ENCODE measurements at regions of chr2 and their contacts with region 1.

Region 1: GRCh38 chr2:186862869-186863709 is 14.1 kb upstream of the ZSWIM2 start:
- DNase-seq: peak; percentile 57
- H3K4me3 Mint-ChIP-seq: no peak overlapping the region
- H3K27ac Mint-ChIP-seq: no peak overlapping the region
- H3K4me1 Mint-ChIP-seq: no peaks in the 10 kb centered on the region
- H3K27me3 Mint-ChIP-seq: no peaks in the 10 kb centered on the region
- CTCF ChIP-seq: peak; percentile 74

Region 2: DNA sequence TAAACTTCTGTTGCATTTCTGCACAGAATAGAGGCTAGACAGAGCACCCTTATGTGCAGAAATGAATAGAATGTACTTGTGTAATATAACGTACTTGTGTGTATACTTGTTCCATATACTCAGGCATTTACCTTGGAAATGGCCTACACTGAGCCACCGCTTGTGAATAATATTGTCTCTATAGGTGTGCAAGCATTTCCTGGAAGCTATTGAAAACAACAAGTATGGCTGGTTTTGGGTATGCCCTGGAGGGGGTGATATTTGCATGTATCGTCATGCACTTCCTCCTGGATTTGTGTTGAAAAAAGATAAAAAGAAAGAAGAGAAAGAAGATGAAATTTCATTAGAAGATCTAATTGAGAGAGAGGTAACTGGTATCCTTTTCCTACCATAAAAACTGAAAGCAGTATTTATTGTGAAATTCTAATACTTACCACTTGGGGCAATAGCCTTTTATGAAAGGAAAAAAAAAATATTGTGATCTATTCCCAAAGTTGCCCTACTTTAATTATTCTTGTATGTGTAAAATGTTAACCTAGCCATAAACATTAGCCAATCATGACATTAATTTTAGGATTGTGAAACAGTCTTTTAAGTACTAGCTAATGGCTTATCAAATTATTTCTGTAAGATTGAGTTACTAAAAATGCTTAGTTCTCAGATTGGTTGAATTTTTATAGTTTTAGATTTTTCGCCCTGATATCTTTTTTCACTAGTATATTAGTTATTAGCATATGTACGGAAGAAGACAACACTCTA is 359.1 kb before region 1 on chr2:
- CTCF ChIA-PET with region 1: no interaction called
- POLR2A ChIA-PET with region 1: no interaction called
- intact Hi-C with region 1: loop called (anchors 10 kb)
- DNase-seq: peak; percentile 35
- H3K4me3 Mint-ChIP-seq: no peak overlapping the region
- H3K27ac Mint-ChIP-seq: no peak overlapping the region
- H3K4me1 Mint-ChIP-seq: peaks cover 9% of the 10 kb centered on the region
- H3K27me3 Mint-ChIP-seq: no peaks in the 10 kb centered on the region
- CTCF ChIP-seq: peak; percentile 42

Region 3: GRCh38 chr2:187138265-187138664 is 275.2 kb after region 1 on chr2:
- CTCF ChIA-PET with region 1: interaction called, 5 read pairs
- POLR2A ChIA-PET with region 1: no interaction called
- intact Hi-C with region 1: loop called (anchors 10 kb)
- DNase-seq: peak; percentile 43
- H3K4me3 Mint-ChIP-seq: no peak overlapping the region
- H3K27ac Mint-ChIP-seq: no peak overlapping the region
- H3K4me1 Mint-ChIP-seq: no peaks in the 10 kb centered on the region
- H3K27me3 Mint-ChIP-seq: no peaks in the 10 kb centered on the region
- CTCF ChIP-seq: peak; percentile 28

Region 4: GRCh38 chr2:187299122-187299906 is 436.2 kb after region 1 on chr2:
- CTCF ChIA-PET with region 1: interaction called, 4 read pairs
- POLR2A ChIA-PET with region 1: no interaction called
- intact Hi-C with region 1: loop called (anchors 1 kb)
- DNase-seq: peak; percentile 47
- H3K4me3 Mint-ChIP-seq: no peak overlapping the region
- H3K27ac Mint-ChIP-seq: no peak overlapping the region
- H3K4me1 Mint-ChIP-seq: peaks cover 6% of the 10 kb centered on the region
- H3K27me3 Mint-ChIP-seq: no peaks in the 10 kb centered on the region
- CTCF ChIP-seq: peak; percentile 48

Region 5: DNA sequence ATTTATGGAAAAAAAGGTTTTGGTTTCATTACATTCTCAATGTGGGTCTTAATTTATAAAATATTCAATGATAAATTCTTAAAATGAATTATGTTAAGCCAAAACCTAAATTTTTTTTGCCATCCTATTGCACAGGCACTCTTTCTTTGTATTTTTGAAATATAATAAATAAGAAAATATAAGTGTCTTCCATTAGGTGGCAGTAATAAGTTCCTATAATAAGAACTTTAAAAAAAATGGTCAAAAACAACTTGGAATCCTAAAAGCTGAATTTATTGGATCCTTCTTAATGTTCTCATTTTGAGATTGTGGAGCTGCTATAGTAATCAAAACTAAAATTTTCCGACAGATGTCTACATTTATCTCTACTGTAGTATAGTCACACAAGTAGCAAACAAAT is 579.3 kb after region 1 on chr2:
- CTCF ChIA-PET with region 1: interaction called, 12 read pairs
- POLR2A ChIA-PET with region 1: no interaction called
- intact Hi-C with region 1: no loop called
- DNase-seq: no peak
- H3K4me3 Mint-ChIP-seq: no peak overlapping the region
- H3K27ac Mint-ChIP-seq: no peak overlapping the region
- H3K4me1 Mint-ChIP-seq: no peaks in the 10 kb centered on the region
- H3K27me3 Mint-ChIP-seq: no peaks in the 10 kb centered on the region
- CTCF ChIP-seq: no peak

Region 6: GRCh38 chr2:187453078-187453641 is 590.1 kb after region 1 on chr2:
- CTCF ChIA-PET with region 1: interaction called, 36 read pairs
- POLR2A ChIA-PET with region 1: interaction called, 6 read pairs
- intact Hi-C with region 1: loop called (anchors 1 kb)
- DNase-seq: peak; percentile 56
- H3K4me3 Mint-ChIP-seq: no peak overlapping the region
- H3K27ac Mint-ChIP-seq: no peak overlapping the region
- H3K4me1 Mint-ChIP-seq: peaks cover 5% of the 10 kb centered on the region
- H3K27me3 Mint-ChIP-seq: no peaks in the 10 kb centered on the region
- CTCF ChIP-seq: peak; percentile 53

Region 7: DNA sequence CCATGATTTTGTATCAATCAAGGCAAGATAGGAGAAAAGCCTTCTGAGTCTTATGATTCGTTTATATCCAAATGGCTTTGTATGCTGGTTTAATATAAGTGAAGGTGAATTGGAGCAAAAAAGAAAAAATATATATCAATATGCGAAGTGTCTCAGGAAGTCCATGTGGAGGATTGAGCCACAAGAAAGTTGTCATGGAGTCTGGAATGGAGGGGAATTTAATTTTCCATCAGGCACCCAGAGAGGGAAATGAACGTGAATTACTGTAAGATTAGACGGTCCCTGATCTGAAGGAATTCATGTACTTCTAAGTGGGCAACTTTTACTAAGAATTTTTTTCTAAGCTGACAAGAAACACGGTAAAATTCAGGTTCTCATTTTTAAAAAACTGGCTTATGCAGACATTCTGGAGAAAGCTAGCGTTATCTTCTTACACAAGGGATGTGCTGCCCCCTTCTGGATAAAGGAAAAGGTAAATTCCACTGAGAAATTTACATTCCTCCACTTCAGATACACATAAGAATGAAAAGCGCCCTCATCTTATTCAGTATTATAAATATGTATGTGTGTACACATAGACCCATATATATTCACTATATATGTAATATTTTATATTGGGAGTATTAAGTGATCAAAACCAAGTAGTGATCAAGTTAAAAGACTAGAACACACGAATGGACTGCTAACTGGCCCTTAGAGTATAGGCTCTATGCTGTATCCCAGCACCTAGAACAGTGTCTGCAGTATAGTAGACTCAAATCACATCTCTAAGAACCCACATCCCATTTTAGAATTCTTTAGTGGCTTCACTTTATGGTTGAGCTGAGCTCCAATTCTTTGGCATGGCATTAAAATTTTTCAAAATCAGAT is 980.1 kb after region 1 on chr2:
- CTCF ChIA-PET with region 1: no interaction called
- POLR2A ChIA-PET with region 1: no interaction called
- intact Hi-C with region 1: loop called (anchors 5 kb)
- DNase-seq: peak; percentile 74
- H3K4me3 Mint-ChIP-seq: no peak overlapping the region
- H3K27ac Mint-ChIP-seq: no peak overlapping the region
- H3K4me1 Mint-ChIP-seq: no peaks in the 10 kb centered on the region
- H3K27me3 Mint-ChIP-seq: no peaks in the 10 kb centered on the region
- CTCF ChIP-seq: peak; percentile 56